Activated CD4-positive, alpha-beta T cell treated with anti-CD3 and anti-CD28 coated beads for 36 hours (primary cell): ENCODE measurements at regions of chr4 and their contacts with region 1.

Region 1: DNA sequence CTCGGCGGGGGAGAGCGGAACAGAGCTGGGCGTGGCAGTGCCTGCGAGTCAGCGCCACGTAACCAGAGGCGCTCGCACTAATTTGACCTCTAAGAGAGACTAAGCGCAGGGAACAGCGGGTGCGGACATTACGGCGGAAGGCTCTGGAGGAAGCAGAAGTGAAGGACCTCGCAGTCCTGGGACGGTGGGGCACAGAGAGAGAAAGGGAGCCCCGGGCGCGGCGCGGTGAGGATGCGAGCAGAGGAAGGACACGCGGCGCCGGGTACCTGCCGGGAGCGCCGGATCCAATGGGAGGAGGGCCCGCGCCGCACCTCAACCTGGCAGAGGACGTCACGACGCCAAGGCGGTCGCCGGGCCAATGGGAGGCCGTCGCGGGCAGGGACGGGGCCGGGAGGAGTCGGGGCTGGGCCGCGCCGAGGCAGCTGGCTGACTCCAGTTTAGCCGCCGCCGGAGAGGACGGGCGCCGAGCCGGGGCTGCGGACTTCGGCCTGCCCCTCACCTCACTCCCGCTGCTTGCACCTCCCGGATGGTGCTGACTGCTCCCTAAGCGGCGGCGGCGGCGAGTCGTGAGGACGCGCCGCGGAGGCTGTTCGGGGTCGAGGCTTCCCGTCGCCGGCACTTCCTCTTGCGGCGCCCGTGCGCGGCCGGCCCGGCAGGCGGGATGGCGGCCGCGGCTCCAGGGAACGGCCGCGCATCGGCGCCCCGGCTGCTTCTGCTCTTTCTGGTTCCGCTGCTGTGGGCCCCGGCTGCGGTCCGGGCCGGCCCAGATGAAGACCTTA is at the start of gene TMEM165:
- DNase-seq: peak; percentile 96
- ATAC-seq: peak; percentile 97
- H3K4me3 Mint-ChIP-seq: peak within 1 kb of the TSS; percentile 89
- H3K27ac Mint-ChIP-seq: peak within 1 kb of the TSS; percentile 89
- H3K4me1 Mint-ChIP-seq: peaks cover 30% of the 10 kb centered on the region
- H3K27me3 Mint-ChIP-seq: no peaks in the 10 kb centered on the region
- total RNA-seq, gene TMEM165: 43.4 to 49.5 TPM

Region 2: GRCh38 chr4:55143863-55144262 is 251.9 kb before region 1 on chr4:
- CTCF ChIA-PET with region 1: no interaction called
- POLR2A ChIA-PET with region 1: no interaction called
- intact Hi-C with region 1: no loop called
- DNase-seq: no peak
- ATAC-seq: no peak
- H3K4me3 Mint-ChIP-seq: no peak overlapping the region
- H3K27ac Mint-ChIP-seq: no peak overlapping the region
- H3K4me1 Mint-ChIP-seq: no peaks in the 10 kb centered on the region
- H3K27me3 Mint-ChIP-seq: peaks cover 16% of the 10 kb centered on the region

Region 3: DNA sequence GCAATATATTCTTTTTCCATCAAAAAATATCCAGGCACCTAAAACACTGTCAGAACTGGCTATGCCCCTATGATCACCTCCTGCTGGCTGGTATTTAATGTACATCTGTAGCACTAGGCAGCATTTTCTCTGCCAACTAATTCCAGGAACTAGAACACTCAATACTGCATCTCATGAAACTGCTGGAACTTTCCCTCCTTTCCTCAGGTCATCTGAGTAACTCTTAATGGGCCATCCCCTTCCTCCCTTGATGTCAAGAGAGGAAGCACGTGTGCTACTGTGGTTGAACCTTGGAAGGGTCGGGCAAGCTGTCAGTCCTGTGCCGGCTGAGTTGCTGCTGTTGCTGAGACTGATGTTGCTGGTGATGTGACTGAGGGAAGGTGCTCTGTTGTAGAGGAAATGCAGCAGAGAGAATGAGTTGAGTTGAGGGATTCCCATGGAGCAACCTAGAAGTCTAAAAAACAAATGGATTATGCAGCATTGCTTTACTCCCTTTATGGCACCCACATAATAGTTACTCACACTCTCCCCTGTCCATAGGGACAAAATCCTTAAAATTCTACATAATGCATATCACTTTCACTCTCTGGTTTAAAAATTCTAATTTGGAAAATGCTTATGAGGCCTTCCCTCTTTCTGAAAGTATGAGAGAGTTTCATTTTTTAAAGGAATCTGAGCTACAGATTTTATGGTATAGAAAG is 39.6 kb after region 1 on chr4:
- CTCF ChIA-PET with region 1: no interaction called
- POLR2A ChIA-PET with region 1: no interaction called
- intact Hi-C with region 1: loop called in 1 of 2 experiments (anchors 5 kb)
- DNase-seq: peak; percentile 62
- ATAC-seq: peak; percentile 96
- H3K4me3 Mint-ChIP-seq: no peak overlapping the region
- H3K27ac Mint-ChIP-seq: peak overlapping the region; percentile 73
- H3K4me1 Mint-ChIP-seq: peaks cover 15% of the 10 kb centered on the region
- H3K27me3 Mint-ChIP-seq: no peaks in the 10 kb centered on the region

Region 4: GRCh38 chr4:55673424-55673823 is 277.7 kb after region 1 on chr4:
- CTCF ChIA-PET with region 1: no interaction called
- POLR2A ChIA-PET with region 1: no interaction called
- intact Hi-C with region 1: no loop called
- DNase-seq: no peak
- ATAC-seq: no peak
- H3K4me3 Mint-ChIP-seq: no peak overlapping the region
- H3K27ac Mint-ChIP-seq: no peak overlapping the region
- H3K4me1 Mint-ChIP-seq: no peaks in the 10 kb centered on the region
- H3K27me3 Mint-ChIP-seq: peaks cover 27% of the 10 kb centered on the region

Region 5: DNA sequence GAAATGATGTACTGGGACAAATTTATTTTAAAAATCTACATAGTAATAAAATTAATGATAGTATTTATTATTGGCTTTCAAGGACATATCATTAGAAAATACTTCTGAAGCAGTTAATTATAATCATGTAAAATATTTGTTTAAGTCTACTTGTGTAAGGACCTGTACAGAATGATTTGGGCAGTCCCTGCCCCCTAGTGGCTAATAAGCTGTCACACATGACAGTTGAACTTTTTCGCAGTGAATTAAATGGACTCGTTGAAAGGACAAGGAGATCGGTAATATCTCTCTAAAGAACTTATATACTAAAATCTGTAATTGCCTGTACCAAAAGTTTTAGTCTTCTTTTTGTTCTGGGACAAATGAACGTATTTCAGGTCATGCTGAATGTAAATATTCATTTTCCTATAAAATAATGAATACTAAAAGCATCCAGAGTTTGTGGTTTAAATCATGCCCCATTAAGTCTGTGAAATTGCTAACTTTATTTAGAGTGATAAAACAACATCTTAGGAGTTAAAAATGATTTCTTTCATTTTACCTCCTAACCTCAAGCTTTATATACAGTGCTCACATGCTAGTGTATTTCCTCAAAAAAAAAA is 471.4 kb after region 1 on chr4:
- CTCF ChIA-PET with region 1: no interaction called
- POLR2A ChIA-PET with region 1: no interaction called
- intact Hi-C with region 1: loop called in 1 of 2 experiments (anchors 5 kb)
- DNase-seq: peak; percentile 20
- ATAC-seq: peak; percentile 62
- H3K4me3 Mint-ChIP-seq: no peak overlapping the region
- H3K27ac Mint-ChIP-seq: no peak overlapping the region
- H3K4me1 Mint-ChIP-seq: peaks cover 20% of the 10 kb centered on the region
- H3K27me3 Mint-ChIP-seq: no peaks in the 10 kb centered on the region

Region 6: GRCh38 chr4:56387023-56388001 is 991.6 kb after region 1 on chr4 and contains the start of gene AASDH:
- CTCF ChIA-PET with region 1: no interaction called
- POLR2A ChIA-PET with region 1: no interaction called
- intact Hi-C with region 1: loop called in 1 of 2 experiments (anchors 2 kb)
- DNase-seq: peak; percentile 97
- ATAC-seq: peak; percentile 94
- H3K4me3 Mint-ChIP-seq: peak within 1 kb of the TSS; percentile 98
- H3K27ac Mint-ChIP-seq: peak within 1 kb of the TSS; percentile 100
- H3K4me1 Mint-ChIP-seq: peaks cover 31% of the 10 kb centered on the region
- H3K27me3 Mint-ChIP-seq: no peaks in the 10 kb centered on the region
- total RNA-seq, gene AASDH: 13.3 to 16.4 TPM